ENCODE measurements at regions of chr1 and their contacts with region 1.

Region 1: GRCh38 chr1:100459358-100460114 is 78.4 kb upstream of the GPR88 start:
- H3K4me3 Mint-ChIP-seq: no peak overlapping the region
- H3K27ac Mint-ChIP-seq: no peak overlapping the region
- H3K4me1 Mint-ChIP-seq: peaks cover 9% of the 10 kb centered on the region
- H3K27me3 Mint-ChIP-seq: no peaks in the 10 kb centered on the region

Region 2: GRCh38 chr1:99808391-99809115 is 651.0 kb before region 1 on chr1:
- intact Hi-C with region 1: loop called (anchors 1 kb)
- H3K4me3 Mint-ChIP-seq: no peak overlapping the region
- H3K27ac Mint-ChIP-seq: no peak overlapping the region
- H3K4me1 Mint-ChIP-seq: no peaks in the 10 kb centered on the region
- H3K27me3 Mint-ChIP-seq: peaks cover 3% of the 10 kb centered on the region

Region 3: GRCh38 chr1:99906535-99906934 is 553.0 kb before region 1 on chr1:
- intact Hi-C with region 1: no loop called
- H3K4me3 Mint-ChIP-seq: no peak overlapping the region
- H3K27ac Mint-ChIP-seq: no peak overlapping the region
- H3K4me1 Mint-ChIP-seq: no peaks in the 10 kb centered on the region
- H3K27me3 Mint-ChIP-seq: no peaks in the 10 kb centered on the region

Region 4: DNA sequence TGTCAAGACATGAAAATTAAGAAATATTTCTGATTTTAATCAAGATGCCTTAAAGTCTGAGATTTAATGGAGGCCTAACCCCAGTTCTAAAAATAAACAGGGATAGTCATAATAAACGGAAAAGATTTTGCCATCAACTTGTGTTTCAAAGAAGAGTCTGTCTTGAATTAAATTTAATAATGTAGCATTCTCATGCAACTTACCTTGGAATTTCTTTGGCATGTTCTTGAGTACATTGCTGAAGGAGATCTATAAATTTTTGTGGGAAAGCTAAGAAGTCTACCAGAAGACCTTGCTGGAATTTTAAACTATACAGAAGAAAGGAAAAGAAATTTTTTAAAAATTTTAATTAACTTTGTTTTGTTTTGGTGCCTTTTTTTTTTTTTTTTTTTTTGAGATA is 337.4 kb before region 1 on chr1:
- intact Hi-C with region 1: loop called (anchors 10 kb)
- H3K4me3 Mint-ChIP-seq: no peak overlapping the region
- H3K27ac Mint-ChIP-seq: no peak overlapping the region
- H3K4me1 Mint-ChIP-seq: no peaks in the 10 kb centered on the region
- H3K27me3 Mint-ChIP-seq: no peaks in the 10 kb centered on the region

Region 5: GRCh38 chr1:100277866-100278265 is 181.7 kb before region 1 on chr1:
- intact Hi-C with region 1: loop called (anchors 5 kb)
- H3K4me3 Mint-ChIP-seq: no peak overlapping the region
- H3K27ac Mint-ChIP-seq: no peak overlapping the region
- H3K4me1 Mint-ChIP-seq: no peaks in the 10 kb centered on the region
- H3K27me3 Mint-ChIP-seq: no peaks in the 10 kb centered on the region

Region 6: GRCh38 chr1:100543640-100544039 is 84.1 kb after region 1 on chr1:
- intact Hi-C with region 1: loop called (anchors 5 kb)
- H3K4me3 Mint-ChIP-seq: no peak overlapping the region
- H3K27ac Mint-ChIP-seq: no peak overlapping the region
- H3K4me1 Mint-ChIP-seq: peaks cover 11% of the 10 kb centered on the region
- H3K27me3 Mint-ChIP-seq: peaks cover 20% of the 10 kb centered on the region

Region 7: GRCh38 chr1:100606438-100606837 is 146.9 kb after region 1 on chr1:
- intact Hi-C with region 1: loop called (anchors 5 kb)
- H3K4me3 Mint-ChIP-seq: no peak overlapping the region
- H3K27ac Mint-ChIP-seq: no peak overlapping the region
- H3K4me1 Mint-ChIP-seq: peaks cover 5% of the 10 kb centered on the region
- H3K27me3 Mint-ChIP-seq: no peaks in the 10 kb centered on the region

Region 8: GRCh38 chr1:100866041-100866900 is 406.7 kb after region 1 on chr1:
- intact Hi-C with region 1: loop called (anchors 1 kb)
- H3K4me3 Mint-ChIP-seq: no peak overlapping the region
- H3K27ac Mint-ChIP-seq: no peak overlapping the region
- H3K4me1 Mint-ChIP-seq: no peaks in the 10 kb centered on the region
- H3K27me3 Mint-ChIP-seq: no peaks in the 10 kb centered on the region